ENCODE measurements at regions of chr14 and their contacts with region 1.

Region 1: GRCh38 chr14:77023001-77023996 is 5.2 kb downstream of the IRF2BPL start:
- DNase-seq: no peak
- ATAC-seq: peak in 6 of 8 donors; percentile 38 to 65 (median 48)
- H3K4me3 ChIP-seq: peak overlapping the region in 9 of 10 donors; percentile 1 to 98 (median 83)
- H3K27ac ChIP-seq: peak overlapping the region; percentile 8 to 100 (median 100)
- H3K4me1 ChIP-seq: peaks cover 16 to 52% (median 42%) of the 10 kb centered on the region in 9 donors
- H3K27me3 ChIP-seq: no peaks in the 10 kb centered on the region
- CTCF ChIP-seq: peak in 5 of 9 donors; percentile 6 to 34 (median 27)

Region 2: DNA sequence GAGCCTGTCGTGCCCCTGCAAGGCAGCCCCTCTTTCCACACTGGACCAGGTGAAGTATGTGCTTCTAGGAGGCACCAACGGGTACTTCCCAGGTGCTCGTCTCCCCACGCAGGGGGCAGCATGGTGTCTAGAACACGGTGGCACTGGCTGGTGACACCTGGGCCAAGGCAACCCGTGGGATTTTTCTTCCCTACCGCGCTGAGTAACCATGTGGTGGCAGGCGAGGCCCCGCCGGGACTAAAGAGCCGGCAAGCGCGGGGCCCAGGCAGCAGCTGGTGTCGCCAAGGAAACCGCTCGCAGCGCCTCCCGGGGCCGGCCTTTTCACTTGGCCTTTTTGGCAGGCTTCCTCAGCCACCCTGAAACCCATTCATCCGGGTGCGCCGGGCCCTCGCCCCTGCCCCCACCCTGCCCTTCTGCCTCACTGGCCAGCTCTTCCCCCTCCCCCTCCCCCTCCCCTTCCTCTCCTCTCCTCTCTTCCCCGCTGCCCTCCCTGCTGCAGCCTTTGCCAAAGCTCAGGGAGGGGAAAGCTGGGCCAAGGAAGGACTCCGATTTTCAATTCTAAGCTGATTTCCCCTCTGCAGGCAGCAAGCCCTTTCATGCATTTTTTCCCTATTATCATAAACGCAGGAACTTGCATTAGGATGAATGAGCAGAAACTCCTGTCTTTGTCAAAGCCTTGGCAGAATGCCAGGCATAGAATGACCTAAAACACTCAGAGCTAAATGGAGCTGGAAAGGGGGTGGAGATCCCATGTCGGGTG is 76.0 kb before region 1 on chr14:
- intact Hi-C with region 1: loop called in 1 of 10 experiments (anchors 5 kb)
- DNase-seq: peak; percentile 90 to 93
- ATAC-seq: peak; percentile 89 to 94 (median 93)
- H3K4me3 ChIP-seq: peak overlapping the region in 5 of 10 donors; percentile 5 to 38 (median 15)
- H3K27ac ChIP-seq: peak overlapping the region; percentile 1 to 90 (median 83)
- H3K4me1 ChIP-seq: peaks cover 21 to 56% (median 45%) of the 10 kb centered on the region in 9 donors
- H3K27me3 ChIP-seq: no peaks in the 10 kb centered on the region
- CTCF ChIP-seq: peak; percentile 25 to 79 (median 63)

Region 3: GRCh38 chr14:76956316-76957090 is 66.8 kb before region 1 on chr14:
- intact Hi-C with region 1: loop called (anchors 2 to 10 kb)
- DNase-seq: peak; percentile 90 to 92
- ATAC-seq: peak; percentile 76 to 87 (median 82)
- H3K4me3 ChIP-seq: peak overlapping the region in 9 of 10 donors; percentile 19 to 57 (median 49)
- H3K27ac ChIP-seq: peak overlapping the region; percentile 84 to 99 (median 97)
- H3K4me1 ChIP-seq: peaks cover 21 to 79% (median 53%) of the 10 kb centered on the region in 9 donors
- H3K27me3 ChIP-seq: no peaks in the 10 kb centered on the region
- CTCF ChIP-seq: peak in 5 of 9 donors; percentile 17 to 29 (median 26)

Region 4: DNA sequence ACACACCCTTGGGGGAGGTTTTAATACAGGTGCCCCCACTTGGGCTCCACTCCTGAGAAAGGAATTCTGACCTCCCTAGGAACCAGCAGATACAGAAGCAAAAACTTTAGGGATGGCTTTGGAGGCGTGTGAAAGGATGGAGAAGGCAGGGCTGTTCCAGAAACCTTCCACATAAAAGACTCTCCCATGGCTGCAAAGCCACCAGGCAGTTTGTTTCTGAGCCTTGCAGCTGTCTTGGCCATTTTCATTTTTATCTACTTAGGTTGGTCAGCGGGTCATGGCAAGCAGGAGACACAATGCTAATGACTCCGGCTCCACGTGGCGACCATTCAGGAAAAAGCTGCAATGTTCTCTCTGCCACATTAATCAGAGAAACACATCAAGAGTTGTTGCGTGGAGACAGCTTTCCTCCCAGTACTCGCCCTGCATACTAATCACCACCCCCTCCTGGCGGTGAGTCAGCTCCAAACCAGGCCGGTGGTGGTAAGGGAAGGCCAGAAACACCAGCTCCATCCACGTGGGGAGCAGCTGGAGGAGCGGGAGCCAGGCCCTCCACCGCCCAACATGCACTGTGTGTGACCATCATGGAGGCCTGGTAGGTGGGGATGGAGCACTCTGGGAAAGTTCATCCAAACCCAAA is 36.1 kb after region 1 on chr14:
- intact Hi-C with region 1: loop called in 1 of 10 experiments (anchors 5 kb)
- DNase-seq: no peak
- ATAC-seq: peak in 7 of 8 donors; percentile 26 to 71 (median 61)
- H3K4me3 ChIP-seq: no peak overlapping the region
- H3K27ac ChIP-seq: peak overlapping the region in 2 of 10 donors; percentile 26 to 33
- H3K4me1 ChIP-seq: peaks cover 0 to 21% (median under 1%) of the 10 kb centered on the region in 9 donors
- H3K27me3 ChIP-seq: no peaks in the 10 kb centered on the region
- CTCF ChIP-seq: peak in 6 of 9 donors; percentile 4 to 50 (median 28)

Region 5: GRCh38 chr14:77076113-77076631 is 52.9 kb after region 1 on chr14:
- intact Hi-C with region 1: no loop called
- DNase-seq: peak; percentile 81 to 89
- ATAC-seq: peak; percentile 90 to 96 (median 93)
- H3K4me3 ChIP-seq: peak overlapping the region in 8 of 10 donors; percentile 24 to 42 (median 30)
- H3K27ac ChIP-seq: peak overlapping the region; percentile 79 to 95 (median 92)
- H3K4me1 ChIP-seq: peaks cover 9 to 41% (median 28%) of the 10 kb centered on the region in 9 donors
- H3K27me3 ChIP-seq: no peaks in the 10 kb centered on the region
- CTCF ChIP-seq: no peak

Measured in heart right ventricle (tissue), 16 donors.